Posterior vena cava (tissue), 2 donors: ENCODE measurements at regions of chr1 and their contacts with region 1.

Region 1: DNA sequence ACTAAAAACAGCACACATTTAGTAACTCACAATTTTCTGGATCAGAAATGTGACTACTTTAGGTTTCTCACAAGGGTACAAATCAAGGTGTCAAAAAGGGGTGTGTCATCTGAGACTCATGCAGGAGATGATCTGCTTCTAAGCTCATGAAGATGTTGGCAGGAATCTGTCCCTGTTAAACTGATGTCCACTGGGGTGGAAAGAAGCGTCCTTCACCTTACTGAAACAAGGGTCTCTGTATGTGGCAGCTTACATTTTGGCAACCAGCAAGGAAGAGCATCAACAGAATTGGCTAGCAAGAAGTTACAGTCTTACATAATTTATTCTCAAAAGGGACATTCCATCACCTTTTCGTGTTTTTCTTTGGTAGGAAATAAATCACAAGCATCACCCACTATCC is 1223.8 kb downstream of the AMY1C start:
- DNase-seq: no peak

Region 2: GRCh38 chr1:104746994-104747393 is 226.5 kb before region 1 on chr1:
- intact Hi-C with region 1: no loop called
- DNase-seq: no peak

Region 3: DNA sequence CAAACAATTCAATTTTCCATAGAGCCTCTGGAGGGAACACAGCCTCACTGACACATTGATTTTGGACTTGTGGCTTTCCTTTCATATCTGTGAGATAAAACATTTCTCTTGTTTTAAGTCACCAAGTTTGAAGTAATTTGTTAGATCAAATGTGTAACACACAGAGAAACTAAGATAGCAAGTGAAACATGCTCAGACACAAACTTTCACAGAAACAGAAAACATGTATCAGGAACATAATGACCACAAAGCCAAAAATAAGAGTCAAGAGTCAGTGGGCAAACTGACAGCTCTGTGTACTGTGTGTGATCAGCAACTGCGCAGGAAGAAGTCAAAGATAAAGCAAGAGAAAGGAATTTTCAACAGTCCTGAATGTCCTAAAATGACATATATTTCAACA is 13.7 kb after region 1 on chr1:
- intact Hi-C with region 1: loop called in 1 of 2 experiments (anchors 1 kb)
- DNase-seq: no peak